Panc1 (cell line): ENCODE measurements at regions of chr15 and their contacts with region 1.

Region 1: GRCh38 chr15:40928821-40929659 is at the start of gene DLL4:
- DNase-seq: no peak
- ATAC-seq: peak; percentile 72
- H3K4me3 ChIP-seq: peak within 1 kb of the TSS; percentile 48 to 67
- H3K27ac ChIP-seq: no peak within 1 kb of the TSS
- H3K4me1 ChIP-seq: peaks cover 12% of the 10 kb centered on the region; the same call in 1 of the 2 replicates
- H3K27me3 ChIP-seq: peaks cover 3% of the 10 kb centered on the region; the same call in 1 of the 2 replicates
- CTCF ChIP-seq: no peak
- total RNA-seq, gene DLL4: 0.31 TPM

Region 2: DNA sequence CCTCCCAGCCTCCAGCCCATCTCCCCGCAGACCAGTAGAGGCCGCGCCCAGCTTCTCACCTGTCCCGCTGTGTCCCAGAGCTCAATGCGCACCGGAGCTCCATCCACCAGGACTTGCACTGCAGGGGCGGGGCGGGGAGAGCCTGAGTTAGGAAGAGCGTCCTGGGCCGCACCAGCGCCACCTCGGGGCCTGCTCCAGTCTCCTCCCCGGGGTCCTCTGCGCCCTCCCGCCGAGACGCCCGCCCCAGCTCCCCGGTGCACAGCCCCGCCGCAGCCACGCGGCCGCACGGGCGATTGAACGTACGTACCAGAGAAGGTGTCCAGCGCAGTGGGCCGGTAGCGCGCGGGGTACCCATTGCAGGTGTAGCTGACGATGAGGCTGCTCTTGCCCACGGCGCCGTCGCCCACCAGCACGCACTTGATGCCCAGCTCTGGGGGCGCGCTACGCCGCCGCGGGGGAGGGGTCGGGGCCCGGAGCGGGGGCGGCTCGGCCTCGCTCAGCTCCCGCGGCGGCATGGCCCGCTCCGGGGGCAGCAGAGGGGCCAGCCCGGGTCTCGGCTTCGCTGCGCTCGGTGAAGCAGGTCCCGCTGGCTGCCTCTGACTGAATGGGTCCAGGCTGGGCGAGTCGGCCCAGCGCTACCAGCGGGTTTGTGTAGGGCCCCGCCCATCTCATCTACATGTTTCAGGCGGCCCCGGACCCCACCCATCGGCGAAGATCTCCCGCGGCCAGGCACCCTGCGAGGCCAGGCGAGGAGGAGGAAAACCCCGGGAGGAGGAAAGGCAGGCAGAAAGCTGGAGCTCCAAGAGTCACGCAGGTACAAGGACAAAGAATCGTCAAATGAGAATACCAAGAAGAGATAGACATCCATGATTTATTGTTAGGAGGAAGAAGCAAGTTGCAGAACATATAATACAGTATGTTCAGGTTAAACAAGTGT is 55.1 kb before region 1 on chr15 and contains the start of gene RHOV:
- CTCF ChIA-PET with region 1: no interaction called
- POLR2A ChIA-PET with region 1: interaction called, 22 read pairs
- in situ Hi-C with region 1: no loop called
- intact Hi-C with region 1: no loop called
- DNase-seq: no peak
- ATAC-seq: peak; percentile 94
- H3K4me3 ChIP-seq: peak within 1 kb of the TSS; percentile 51 to 59
- H3K27ac ChIP-seq: no peak within 1 kb of the TSS
- H3K4me1 ChIP-seq: peaks cover 4% of the 10 kb centered on the region; the same call in 1 of the 2 replicates
- H3K27me3 ChIP-seq: no peaks in the 10 kb centered on the region
- CTCF ChIP-seq: no peak; the same call in 1 of the 2 replicates
- total RNA-seq, gene RHOV: 4.2 TPM

Region 3: DNA sequence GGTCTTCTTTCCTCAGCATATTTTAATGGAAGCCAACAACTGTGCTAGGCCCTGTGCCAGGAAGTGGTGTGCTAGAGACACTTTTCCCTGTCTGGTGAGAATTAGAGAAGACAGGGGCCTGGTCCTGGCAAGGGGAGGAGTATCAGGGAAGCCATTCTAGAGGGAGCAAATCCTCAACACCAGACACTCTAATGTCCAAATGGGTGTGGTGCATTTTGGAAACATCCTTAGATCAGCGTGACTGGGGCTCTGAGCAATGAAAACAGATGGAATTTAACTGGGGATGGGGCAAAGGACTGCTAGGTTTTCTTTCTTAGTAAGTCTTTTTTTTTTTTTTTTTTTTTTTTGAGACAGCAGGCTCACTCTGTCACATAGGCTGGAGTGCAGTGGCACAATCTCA is 42.5 kb before region 1 on chr15:
- CTCF ChIA-PET with region 1: no interaction called
- POLR2A ChIA-PET with region 1: no interaction called
- in situ Hi-C with region 1: no loop called
- intact Hi-C with region 1: no loop called
- DNase-seq: no peak
- ATAC-seq: no peak; the same call in 1 of the 2 replicates
- H3K4me3 ChIP-seq: no peak overlapping the region
- H3K27ac ChIP-seq: no peak overlapping the region
- H3K4me1 ChIP-seq: no peaks in the 10 kb centered on the region
- H3K27me3 ChIP-seq: no peaks in the 10 kb centered on the region
- CTCF ChIP-seq: no peak

Region 4: DNA sequence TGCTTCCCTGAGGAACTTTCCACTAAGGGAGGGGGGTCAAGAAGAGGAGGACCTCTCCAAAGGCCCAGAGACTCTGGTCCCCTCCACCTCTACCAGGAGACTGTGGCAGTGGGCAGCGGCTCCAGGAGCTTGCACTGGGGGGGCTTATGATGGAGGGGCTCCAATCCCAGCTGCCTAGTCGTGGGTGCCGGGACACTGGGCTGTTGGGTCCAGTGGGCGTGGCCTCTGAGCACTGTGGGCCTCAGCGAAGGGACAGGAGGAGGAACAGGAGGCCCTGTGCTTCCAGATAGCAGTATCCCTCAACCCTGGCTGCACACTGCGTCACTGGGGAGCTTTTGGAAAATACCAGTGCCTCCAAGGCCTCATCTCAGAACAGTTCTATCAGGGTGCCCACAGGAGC is 13.4 kb before region 1 on chr15:
- CTCF ChIA-PET with region 1: interaction called, 12 read pairs
- POLR2A ChIA-PET with region 1: no interaction called
- in situ Hi-C with region 1: no loop called
- intact Hi-C with region 1: no loop called
- DNase-seq: no peak
- ATAC-seq: no peak
- H3K4me3 ChIP-seq: no peak overlapping the region
- H3K27ac ChIP-seq: no peak overlapping the region
- H3K4me1 ChIP-seq: no peaks in the 10 kb centered on the region
- H3K27me3 ChIP-seq: no peaks in the 10 kb centered on the region
- CTCF ChIP-seq: no peak

Region 5: DNA sequence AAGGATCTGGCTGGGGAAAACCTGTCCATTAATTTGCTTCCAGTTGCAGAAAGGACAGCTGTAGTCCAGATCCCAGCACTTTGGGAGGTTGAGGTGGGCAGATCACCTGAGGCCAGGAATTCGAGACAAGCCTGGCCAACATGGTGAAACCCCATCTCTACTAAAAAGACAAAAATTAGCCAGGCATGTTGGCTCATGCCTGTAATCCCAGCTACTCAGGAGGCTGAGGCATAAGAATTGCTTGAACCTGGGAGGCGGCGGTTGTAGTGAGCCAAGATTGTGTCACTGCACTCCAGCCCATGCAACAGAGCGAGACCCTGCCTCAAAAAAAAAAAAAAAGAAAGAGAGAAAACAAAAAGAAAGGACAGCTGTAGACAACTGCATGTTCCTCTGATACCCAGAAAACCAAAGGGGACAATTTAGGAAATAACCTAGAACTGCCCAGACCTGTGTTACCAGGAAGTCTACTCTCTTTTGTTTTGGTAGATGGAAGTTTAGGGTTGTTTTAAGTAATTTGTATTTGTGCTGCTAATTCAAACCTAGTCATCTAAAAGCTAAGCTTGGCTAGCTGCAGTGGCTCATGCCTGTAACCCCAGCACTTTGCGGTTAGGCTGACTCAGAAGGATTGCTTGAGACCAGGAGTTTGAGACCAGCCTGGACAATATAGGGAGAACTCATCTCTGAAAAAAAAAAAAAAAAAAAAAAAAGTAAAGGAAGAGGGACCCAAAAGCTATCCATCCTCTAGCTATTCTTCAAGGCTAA is 278.8 kb after region 1 on chr15:
- CTCF ChIA-PET with region 1: interaction called, 10 read pairs
- POLR2A ChIA-PET with region 1: interaction called, 4 read pairs
- in situ Hi-C with region 1: no loop called
- intact Hi-C with region 1: no loop called
- DNase-seq: no peak
- ATAC-seq: no peak
- H3K4me3 ChIP-seq: no peak overlapping the region
- H3K27ac ChIP-seq: no peak overlapping the region
- H3K4me1 ChIP-seq: no peaks in the 10 kb centered on the region
- H3K27me3 ChIP-seq: no peaks in the 10 kb centered on the region
- CTCF ChIP-seq: no peak

Region 6: GRCh38 chr15:41512940-41513510 is 584.0 kb after region 1 on chr15:
- CTCF ChIA-PET with region 1: no interaction called
- POLR2A ChIA-PET with region 1: no interaction called
- in situ Hi-C with region 1: no loop called
- intact Hi-C with region 1: no loop called
- DNase-seq: no peak
- ATAC-seq: no peak
- H3K4me3 ChIP-seq: no peak overlapping the region
- H3K27ac ChIP-seq: no peak overlapping the region
- H3K4me1 ChIP-seq: peaks cover under 1% of the 10 kb centered on the region
- H3K27me3 ChIP-seq: no peaks in the 10 kb centered on the region
- CTCF ChIP-seq: no peak

Region 7: GRCh38 chr15:41930221-41930866 is 1001.3 kb after region 1 on chr15:
- CTCF ChIA-PET with region 1: no interaction called
- POLR2A ChIA-PET with region 1: no interaction called
- in situ Hi-C with region 1: no loop called
- intact Hi-C with region 1: no loop called
- DNase-seq: peak; percentile 94
- ATAC-seq: peak; percentile 83
- H3K4me3 ChIP-seq: no peak overlapping the region
- H3K27ac ChIP-seq: peak overlapping the region; percentile 94
- H3K4me1 ChIP-seq: peaks cover 84% of the 10 kb centered on the region
- H3K27me3 ChIP-seq: no peaks in the 10 kb centered on the region
- CTCF ChIP-seq: no peak; the same call in 1 of the 2 replicates